Natural killer cell (primary cell): ENCODE measurements at regions of chr13 and their contacts with region 1.

Region 1: DNA sequence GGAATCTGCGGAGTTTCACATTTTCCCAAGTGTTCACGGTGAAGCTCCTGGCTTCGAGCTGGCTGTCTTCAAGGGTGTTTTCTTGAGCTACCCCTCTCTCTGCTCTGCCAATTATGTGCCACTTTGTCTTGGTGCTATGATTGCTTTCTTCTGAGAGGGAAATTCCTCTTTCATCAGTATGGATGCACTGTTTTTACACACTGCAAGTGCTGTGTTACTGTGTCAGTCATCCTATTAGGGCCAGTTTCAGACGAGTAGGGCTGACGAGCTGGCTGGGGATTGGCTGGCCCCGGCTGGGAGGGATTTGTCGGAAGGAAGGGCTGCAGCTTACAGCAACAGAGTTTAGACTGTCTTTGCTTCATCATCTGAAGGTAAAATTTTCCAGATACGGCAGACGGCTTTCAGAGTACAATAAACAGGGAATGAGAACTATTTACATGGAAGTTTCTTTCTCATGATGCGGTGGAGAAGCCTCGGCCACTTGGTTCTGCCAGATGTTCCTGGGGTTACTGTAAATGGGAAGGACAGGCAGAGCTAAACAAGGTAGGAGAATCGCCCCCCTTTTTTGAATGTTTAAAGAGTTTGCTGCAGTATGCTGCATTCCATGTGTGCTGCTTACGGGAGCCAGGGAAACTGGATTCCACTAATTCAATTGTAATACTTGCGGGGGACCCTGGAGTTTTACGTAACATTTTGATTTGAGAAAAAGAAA is at the start of gene MBNL2:
- DNase-seq: peak; percentile 77 to 93
- ATAC-seq: peak; percentile 90 to 97 (median 94)
- H3K4me3 ChIP-seq: peak within 1 kb of the TSS; percentile 59
- H3K4me3 Mint-ChIP-seq: peak within 1 kb of the TSS; percentile 96
- H3K27ac ChIP-seq: peak within 1 kb of the TSS; percentile 80
- H3K27ac Mint-ChIP-seq: peak within 1 kb of the TSS; percentile 93
- H3K4me1 ChIP-seq: peaks cover 33% of the 10 kb centered on the region
- H3K4me1 Mint-ChIP-seq: peaks cover 48 to 49% of the 10 kb centered on the region in 2 donors
- H3K27me3 ChIP-seq: no peaks in the 10 kb centered on the region
- H3K27me3 Mint-ChIP-seq: no peaks in the 10 kb centered on the region
- CTCF ChIP-seq: no peak
- total RNA-seq, gene MBNL2: 30.9 to 38.3 (median 33.1) TPM

Region 2: DNA sequence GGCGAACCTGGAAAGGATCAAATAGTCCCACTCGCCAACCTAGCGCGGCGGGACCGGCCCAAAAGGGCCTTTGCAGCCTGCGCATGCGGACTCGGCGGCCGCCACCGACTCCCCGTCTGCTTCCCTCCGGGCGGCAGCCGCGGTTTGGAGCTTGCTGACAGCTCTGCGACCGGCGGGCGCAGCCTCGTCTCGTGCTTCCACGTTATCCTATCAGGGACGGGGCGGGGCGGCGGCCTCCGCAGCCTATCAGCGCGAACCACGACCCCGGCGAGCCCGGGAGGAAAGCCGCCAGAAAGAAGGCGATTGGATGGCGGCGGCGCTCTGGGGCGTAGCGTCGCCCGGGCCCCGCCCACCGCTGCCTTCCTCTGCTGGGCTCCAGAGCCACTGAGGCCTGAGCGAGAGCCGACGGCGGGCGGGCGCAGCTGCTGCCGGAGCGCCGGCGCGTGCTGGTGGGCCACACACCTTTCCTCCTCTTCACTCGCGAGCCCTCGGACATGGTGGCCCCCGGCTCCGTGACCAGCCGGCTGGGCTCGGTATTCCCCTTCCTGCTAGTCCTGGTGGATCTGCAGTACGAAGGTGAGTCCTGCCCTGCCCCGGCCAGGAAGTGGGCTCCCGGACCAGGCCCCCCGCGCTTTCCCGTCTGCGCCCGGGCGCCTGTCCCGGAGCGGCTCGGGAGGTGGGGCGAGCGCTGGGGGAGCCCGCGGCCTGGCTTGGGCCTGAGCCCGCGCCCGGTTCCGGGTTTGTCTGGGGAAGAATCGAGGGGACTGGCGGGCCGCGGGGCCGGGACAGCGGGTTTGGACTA is 1545.2 kb before region 1 on chr13 and contains the start of gene DNAJC3:
- intact Hi-C with region 1: loop called (anchors 5 kb)
- DNase-seq: peak; percentile 98 to 99
- ATAC-seq: peak; percentile 92 to 99 (median 93)
- H3K4me3 ChIP-seq: peak within 1 kb of the TSS; percentile 87
- H3K4me3 Mint-ChIP-seq: peak within 1 kb of the TSS; percentile 99
- H3K27ac ChIP-seq: peak within 1 kb of the TSS; percentile 83
- H3K27ac Mint-ChIP-seq: peak within 1 kb of the TSS; percentile 95 to 99
- H3K4me1 ChIP-seq: peaks cover 12% of the 10 kb centered on the region
- H3K4me1 Mint-ChIP-seq: peaks cover 39 to 59% of the 10 kb centered on the region in 2 donors
- H3K27me3 ChIP-seq: no peaks in the 10 kb centered on the region
- H3K27me3 Mint-ChIP-seq: no peaks in the 10 kb centered on the region
- CTCF ChIP-seq: no peak
- total RNA-seq, gene DNAJC3: 26.5 to 38.1 (median 29.0) TPM

Region 3: GRCh38 chr13:97261254-97262005 is 39.3 kb after region 1 on chr13:
- intact Hi-C with region 1: loop called (anchors 5 kb)
- DNase-seq: peak in 1 of 2 donors; percentile 55
- ATAC-seq: peak; percentile 72 to 86 (median 82)
- H3K4me3 ChIP-seq: no peak overlapping the region
- H3K4me3 Mint-ChIP-seq: peak overlapping the region; percentile 74
- H3K27ac ChIP-seq: no peak overlapping the region
- H3K27ac Mint-ChIP-seq: peak overlapping the region; percentile 81 to 84
- H3K4me1 ChIP-seq: peaks cover 27% of the 10 kb centered on the region
- H3K4me1 Mint-ChIP-seq: peaks cover 67 to 69% of the 10 kb centered on the region in 2 donors
- H3K27me3 ChIP-seq: no peaks in the 10 kb centered on the region
- H3K27me3 Mint-ChIP-seq: no peaks in the 10 kb centered on the region
- CTCF ChIP-seq: no peak

Region 4: DNA sequence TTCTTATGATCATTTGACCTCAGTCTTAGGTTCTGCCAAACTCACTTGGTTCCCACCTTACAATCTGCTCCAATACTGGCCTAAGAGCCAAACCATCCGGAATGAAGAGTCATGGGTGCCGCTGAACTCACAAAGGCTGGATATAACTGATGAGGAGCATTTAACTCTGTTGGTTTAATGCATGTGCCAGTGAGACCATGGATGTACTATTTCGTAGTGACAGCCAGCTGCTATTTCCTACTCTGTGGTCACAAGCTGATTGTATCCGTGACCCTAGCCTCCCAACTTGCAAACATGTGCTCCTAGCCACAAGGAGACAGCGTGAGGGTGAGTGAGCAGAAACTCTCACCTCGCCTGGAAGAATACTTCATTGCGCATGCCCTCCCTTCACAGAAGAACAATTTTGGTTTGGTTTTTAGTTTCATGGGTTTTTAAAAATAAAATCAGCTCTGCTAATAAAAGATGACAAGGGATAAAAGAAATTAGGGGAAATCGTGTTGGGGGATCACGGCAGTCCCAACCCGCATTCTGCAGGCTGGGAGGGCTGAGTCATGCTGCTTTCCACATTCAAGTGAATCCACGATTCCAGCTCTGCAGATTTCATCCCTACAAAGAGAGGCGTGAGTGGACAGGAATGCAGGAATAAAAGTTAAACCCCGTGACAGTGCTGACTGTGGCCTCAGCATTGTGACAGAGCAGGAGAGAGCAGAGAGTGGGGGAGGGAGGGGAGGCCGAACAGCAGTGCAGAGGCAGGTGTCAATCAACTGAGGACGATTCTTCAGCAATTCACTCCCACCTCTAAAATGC is 145.1 kb after region 1 on chr13:
- intact Hi-C with region 1: loop called (anchors 2 kb)
- DNase-seq: no peak
- ATAC-seq: peak; percentile 32 to 55 (median 48)
- H3K4me3 ChIP-seq: no peak overlapping the region
- H3K4me3 Mint-ChIP-seq: peak overlapping the region; percentile 25
- H3K27ac ChIP-seq: no peak overlapping the region
- H3K27ac Mint-ChIP-seq: peak overlapping the region; percentile 83 to 95
- H3K4me1 ChIP-seq: peaks cover 8% of the 10 kb centered on the region
- H3K4me1 Mint-ChIP-seq: peaks cover 27 to 29% of the 10 kb centered on the region in 2 donors
- H3K27me3 ChIP-seq: no peaks in the 10 kb centered on the region
- H3K27me3 Mint-ChIP-seq: no peaks in the 10 kb centered on the region
- CTCF ChIP-seq: no peak

Region 5: GRCh38 chr13:97432917-97433726 is 211.0 kb after region 1 on chr13:
- intact Hi-C with region 1: loop called (anchors 1 kb)
- DNase-seq: peak; percentile 99 to 100
- ATAC-seq: peak; percentile 72 to 87 (median 76)
- H3K4me3 ChIP-seq: peak overlapping the region; percentile 91
- H3K4me3 Mint-ChIP-seq: peak overlapping the region; percentile 99
- H3K27ac ChIP-seq: peak overlapping the region; percentile 98
- H3K27ac Mint-ChIP-seq: peak overlapping the region; percentile 91 to 98
- H3K4me1 ChIP-seq: no peaks in the 10 kb centered on the region
- H3K4me1 Mint-ChIP-seq: peaks cover 36% of the 10 kb centered on the region in 2 donors
- H3K27me3 ChIP-seq: no peaks in the 10 kb centered on the region
- H3K27me3 Mint-ChIP-seq: peaks cover 0 to 10% of the 10 kb centered on the region in 2 donors
- CTCF ChIP-seq: no peak